ENCODE measurements at regions of chr15 and their contacts with region 1.

Region 1: DNA sequence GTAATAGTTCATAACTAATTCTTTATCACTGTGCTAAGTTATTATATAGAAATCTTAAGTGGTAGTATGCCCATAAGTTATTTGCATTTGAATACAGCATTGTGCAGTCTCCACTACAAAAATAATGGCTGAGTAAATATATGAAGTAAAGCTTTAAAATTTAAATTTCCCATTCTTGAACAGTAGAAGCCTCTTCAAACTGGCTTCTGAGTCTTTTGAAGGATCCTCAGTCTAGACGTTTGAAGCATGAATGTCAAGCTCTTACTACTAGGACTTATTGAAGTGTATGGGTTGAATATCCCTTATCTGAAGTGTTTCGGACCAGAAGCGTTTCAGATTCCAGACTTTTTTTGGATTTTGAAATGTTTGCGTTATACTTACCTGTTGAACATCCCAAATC is 16.3 kb downstream of the MORF4L1 start:
- DNase-seq: no peak
- H3K4me3 ChIP-seq: no peak overlapping the region
- H3K27ac ChIP-seq: no peak overlapping the region
- H3K4me1 ChIP-seq: peaks cover 0 to 7% (median 0%) of the 10 kb centered on the region in 4 donors
- H3K27me3 ChIP-seq: no peaks in the 10 kb centered on the region
- CTCF ChIP-seq: no peak
- EP300 ChIP-seq: no peak
- POLR2A ChIP-seq: no peak

Region 2: GRCh38 chr15:80489030-80489594 is 1600.1 kb after region 1 on chr15:
- in situ Hi-C with region 1: no loop called
- intact Hi-C with region 1: loop called (anchors 5 kb)
- DNase-seq: no peak
- H3K4me3 ChIP-seq: no peak overlapping the region
- H3K27ac ChIP-seq: peak overlapping the region in 3 of 4 donors; percentile 14 to 20 (median 15)
- H3K4me1 ChIP-seq: peaks cover 0 to 11% (median 2%) of the 10 kb centered on the region in 4 donors
- H3K27me3 ChIP-seq: no peaks in the 10 kb centered on the region
- CTCF ChIP-seq: no peak
- EP300 ChIP-seq: no peak
- POLR2A ChIP-seq: no peak

Measured in transverse colon (tissue), 4 donors.